ENCODE measurements at regions of chr16 and their contacts with region 1.

Region 1: DNA sequence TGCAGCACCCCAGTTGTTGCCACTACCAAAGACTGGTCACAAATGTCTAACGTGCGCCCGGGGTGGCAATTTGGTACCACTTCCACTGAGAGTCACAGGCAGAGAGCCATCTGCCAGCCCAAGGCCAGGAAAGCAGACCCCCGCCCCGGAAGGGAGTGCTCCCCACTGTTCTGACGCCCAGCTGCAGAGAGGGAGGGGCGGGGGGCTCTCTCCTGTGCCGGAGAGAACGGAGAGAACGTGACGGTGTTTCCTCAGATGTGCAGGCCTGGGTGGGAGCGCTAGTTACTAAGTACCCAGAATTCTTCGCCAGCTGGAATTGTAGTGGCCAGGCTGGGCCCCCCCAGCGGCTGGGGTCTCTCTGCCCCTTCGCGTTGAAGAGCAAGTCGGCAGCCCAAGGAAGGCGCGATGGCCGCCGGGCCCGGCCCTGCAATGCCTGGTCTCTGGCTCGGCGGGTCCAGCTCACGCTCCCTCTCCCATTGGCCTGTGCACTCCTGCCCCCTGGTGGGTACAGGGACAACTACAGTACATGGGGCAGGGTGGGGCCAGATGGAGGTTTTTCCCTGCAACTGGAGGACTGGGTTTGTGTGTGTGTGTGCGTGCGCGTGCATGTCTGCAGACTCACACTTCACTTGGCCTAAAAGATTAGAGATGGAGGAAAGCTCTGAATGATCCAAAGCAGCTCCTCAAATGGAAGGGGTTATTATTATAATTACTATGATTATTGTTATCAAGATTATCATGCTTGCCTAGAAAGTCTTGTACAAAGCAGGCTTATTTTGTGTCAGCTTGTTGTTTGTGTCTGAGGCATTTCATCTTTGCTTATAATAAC is 107.1 kb downstream of the AMFR start:
- DNase-seq: peak; percentile 45
- H3K4me3 ChIP-seq: peak overlapping the region; percentile 47
- H3K27ac ChIP-seq: no peak overlapping the region
- H3K27me3 ChIP-seq: peaks cover 18% of the 10 kb centered on the region
- CTCF ChIP-seq: peak; percentile 95

Region 2: GRCh38 chr16:55944377-55944802 is 373.8 kb before region 1 on chr16:
- CTCF ChIA-PET with region 1: interaction called, 199 read pairs
- POLR2A ChIA-PET with region 1: no interaction called
- DNase-seq: peak; percentile 30
- H3K4me3 ChIP-seq: no peak overlapping the region
- H3K27ac ChIP-seq: no peak overlapping the region
- H3K27me3 ChIP-seq: no peaks in the 10 kb centered on the region
- CTCF ChIP-seq: peak; percentile 98

Region 3: GRCh38 chr16:56294579-56294978 is 23.6 kb before region 1 on chr16:
- CTCF ChIA-PET with region 1: interaction called, 11 read pairs
- POLR2A ChIA-PET with region 1: no interaction called
- DNase-seq: peak; percentile 45
- H3K4me3 ChIP-seq: no peak overlapping the region
- H3K27ac ChIP-seq: no peak overlapping the region
- H3K27me3 ChIP-seq: peaks cover 1% of the 10 kb centered on the region
- CTCF ChIP-seq: no peak

Region 4: DNA sequence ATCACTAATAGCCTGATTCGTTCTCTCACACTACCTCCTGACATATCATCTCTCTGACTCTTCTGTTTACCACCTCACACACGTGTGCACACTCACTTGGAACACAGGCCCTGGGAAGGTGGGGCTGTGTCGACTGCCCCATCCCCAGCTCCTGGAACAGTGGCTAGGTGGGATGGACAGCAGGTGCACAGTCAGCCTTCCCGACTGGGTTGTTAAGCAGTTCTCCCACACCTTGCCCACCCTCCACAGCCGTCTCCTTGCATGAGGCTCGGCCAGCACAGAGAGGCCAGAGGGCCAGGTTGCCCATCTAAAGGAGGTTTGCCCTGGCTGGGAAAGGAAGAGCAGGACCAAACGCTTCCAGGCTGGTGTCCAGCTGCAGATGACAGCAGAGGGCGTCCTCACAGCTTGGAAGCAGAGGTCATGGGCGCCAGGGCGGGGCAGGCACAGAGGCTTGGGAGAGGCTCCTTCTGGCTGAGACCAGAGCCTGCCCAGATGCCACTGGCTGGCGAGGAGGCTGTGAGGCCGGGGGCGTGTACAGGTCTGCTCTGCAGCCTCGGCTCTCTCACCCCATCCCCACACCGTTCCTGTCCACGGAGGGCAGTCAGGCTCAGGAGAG is 14.4 kb after region 1 on chr16:
- CTCF ChIA-PET with region 1: interaction called, 65 read pairs
- POLR2A ChIA-PET with region 1: no interaction called
- DNase-seq: no peak
- H3K4me3 ChIP-seq: no peak overlapping the region
- H3K27ac ChIP-seq: no peak overlapping the region
- H3K27me3 ChIP-seq: no peaks in the 10 kb centered on the region
- CTCF ChIP-seq: peak; percentile 34

Region 5: GRCh38 chr16:56356276-56357240 is 38.3 kb after region 1 on chr16:
- CTCF ChIA-PET with region 1: interaction called, 26 read pairs
- POLR2A ChIA-PET with region 1: no interaction called
- DNase-seq: peak; percentile 70
- H3K4me3 ChIP-seq: peak overlapping the region; percentile 41
- H3K27ac ChIP-seq: peak overlapping the region; percentile 94
- H3K27me3 ChIP-seq: no peaks in the 10 kb centered on the region
- CTCF ChIP-seq: peak; percentile 90

Measured in AG04450 (cell line).